Naive thymus-derived CD4-positive, alpha-beta T cell (primary cell): ENCODE measurements at regions of chr16 and their contacts with region 1.

Region 1: DNA sequence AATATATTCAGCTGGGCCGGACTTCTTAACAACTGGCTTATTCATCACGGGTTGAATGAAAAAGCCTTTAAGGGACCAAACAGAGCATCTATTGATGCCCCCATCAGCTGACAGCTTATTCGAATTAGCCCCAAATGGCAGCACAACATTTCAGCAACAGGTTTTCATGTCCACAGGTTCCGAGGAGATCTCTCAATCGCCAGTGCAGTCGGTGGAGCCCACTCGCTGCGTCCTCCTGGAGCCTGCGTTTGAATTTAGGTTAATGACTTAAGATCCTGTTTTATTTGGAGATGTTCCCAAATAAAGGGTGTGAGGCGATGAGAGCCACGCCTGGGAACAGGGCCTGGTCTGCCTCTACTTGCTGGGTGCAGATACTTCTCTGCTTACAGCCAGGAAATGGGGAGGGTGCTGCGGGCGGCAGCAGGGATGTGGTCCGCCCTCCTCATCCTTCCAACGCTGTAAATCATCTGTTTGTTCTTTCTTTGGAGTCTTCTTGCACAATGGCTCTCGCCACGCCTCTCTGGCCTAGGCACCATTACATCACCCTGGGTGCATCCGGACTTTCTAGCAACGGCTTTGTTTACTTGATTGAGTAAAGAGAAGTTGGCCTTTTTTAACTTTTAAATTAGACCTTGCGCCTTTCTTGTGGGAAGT is 22.6 kb downstream of the NDE1 start:
- DNase-seq: peak; percentile 52 to 93 (median 89)
- ATAC-seq: peak; percentile 96
- H3K4me3 ChIP-seq: peak overlapping the region; percentile 32
- H3K4me3 Mint-ChIP-seq: peak overlapping the region; percentile 60 to 86 (median 75)
- H3K27ac ChIP-seq: peak overlapping the region; percentile 86
- H3K27ac Mint-ChIP-seq: peak overlapping the region; percentile 94 to 97 (median 97)
- H3K4me1 ChIP-seq: peaks cover 18 to 27% of the 10 kb centered on the region in 2 donors
- H3K4me1 Mint-ChIP-seq: peaks cover 32 to 57% (median 42%) of the 10 kb centered on the region in 7 donors
- H3K27me3 ChIP-seq: no peaks in the 10 kb centered on the region
- H3K27me3 Mint-ChIP-seq: no peaks in the 10 kb centered on the region

Region 2: GRCh38 chr16:15434425-15435215 is 238.0 kb before region 1 on chr16 and contains the start of gene BMERB1:
- CTCF ChIA-PET with region 1: no interaction called
- POLR2A ChIA-PET with region 1: no interaction called
- intact Hi-C with region 1: no loop called
- DNase-seq: peak in 5 of 9 donors; percentile 7 to 67 (median 13)
- ATAC-seq: peak; percentile 73
- H3K4me3 ChIP-seq: peak within 1 kb of the TSS; percentile 51
- H3K4me3 Mint-ChIP-seq: peak within 1 kb of the TSS; percentile 30 to 92 (median 70)
- H3K27ac ChIP-seq: no peak within 1 kb of the TSS
- H3K27ac Mint-ChIP-seq: peak within 1 kb of the TSS in 3 of 9 donors; percentile 10 to 75 (median 13)
- H3K4me1 ChIP-seq: no peaks in the 10 kb centered on the region
- H3K4me1 Mint-ChIP-seq: peaks cover 0 to 17% (median 11%) of the 10 kb centered on the region in 7 donors
- H3K27me3 ChIP-seq: peaks cover 0 to 5% of the 10 kb centered on the region in 2 donors
- H3K27me3 Mint-ChIP-seq: peaks cover 17 to 25% (median 24%) of the 10 kb centered on the region in 5 donors
- total RNA-seq, gene BMERB1: 1.3 to 8.2 (median 2.8) TPM

Region 3: DNA sequence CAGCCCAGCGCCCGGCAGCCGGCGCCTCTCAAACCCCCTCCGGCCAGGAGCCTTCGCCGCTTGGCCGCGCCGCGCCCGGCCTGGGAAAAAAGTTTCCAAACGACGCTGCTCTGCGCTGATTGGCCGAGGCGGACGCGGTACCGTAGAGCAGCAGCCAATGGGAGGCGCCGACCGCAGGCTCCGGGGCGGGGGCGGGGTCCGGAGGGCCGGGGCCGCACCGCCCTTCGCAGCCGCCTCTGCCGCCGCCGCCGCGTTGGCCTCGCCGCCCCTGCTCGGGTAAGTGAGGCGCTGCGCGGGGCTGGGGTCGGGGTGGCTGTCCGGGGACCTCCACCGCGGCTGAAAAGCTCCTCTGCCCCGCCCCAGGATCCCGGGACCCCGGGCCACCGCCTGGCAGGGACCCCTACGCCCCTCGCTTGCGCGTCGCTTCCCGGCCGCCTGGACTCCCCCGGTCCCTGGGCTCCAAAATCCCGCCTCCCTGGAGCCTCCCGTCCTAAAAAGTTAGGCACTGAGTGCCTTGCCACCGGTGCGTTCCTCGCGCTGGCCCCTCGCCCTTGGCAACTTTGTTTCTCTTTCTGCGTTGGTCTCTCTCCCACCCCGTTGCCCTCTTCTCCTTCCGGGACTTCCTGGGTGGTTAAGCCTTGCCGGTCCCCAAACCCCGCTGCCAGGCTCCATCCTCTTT is 22.5 kb before region 1 on chr16 and contains the start of gene NDE1:
- CTCF ChIA-PET with region 1: interaction called, 3 read pairs
- POLR2A ChIA-PET with region 1: interaction called, 54 read pairs
- intact Hi-C with region 1: loop called (anchors 1 kb)
- DNase-seq: peak; percentile 65 to 85 (median 76)
- ATAC-seq: peak; percentile 99
- H3K4me3 ChIP-seq: peak within 1 kb of the TSS; percentile 84
- H3K4me3 Mint-ChIP-seq: peak within 1 kb of the TSS; percentile 98 to 100 (median 99)
- H3K27ac ChIP-seq: peak within 1 kb of the TSS; percentile 98
- H3K27ac Mint-ChIP-seq: peak within 1 kb of the TSS; percentile 93 to 99 (median 99)
- H3K4me1 ChIP-seq: peaks cover 7 to 14% of the 10 kb centered on the region in 2 donors
- H3K4me1 Mint-ChIP-seq: peaks cover 10 to 37% (median 35%) of the 10 kb centered on the region in 7 donors
- H3K27me3 ChIP-seq: no peaks in the 10 kb centered on the region
- H3K27me3 Mint-ChIP-seq: peaks cover 0 to 2% (median 0%) of the 10 kb centered on the region in 5 donors
- total RNA-seq, gene NDE1: 100.0 to 128 (median 114) TPM

Region 4: DNA sequence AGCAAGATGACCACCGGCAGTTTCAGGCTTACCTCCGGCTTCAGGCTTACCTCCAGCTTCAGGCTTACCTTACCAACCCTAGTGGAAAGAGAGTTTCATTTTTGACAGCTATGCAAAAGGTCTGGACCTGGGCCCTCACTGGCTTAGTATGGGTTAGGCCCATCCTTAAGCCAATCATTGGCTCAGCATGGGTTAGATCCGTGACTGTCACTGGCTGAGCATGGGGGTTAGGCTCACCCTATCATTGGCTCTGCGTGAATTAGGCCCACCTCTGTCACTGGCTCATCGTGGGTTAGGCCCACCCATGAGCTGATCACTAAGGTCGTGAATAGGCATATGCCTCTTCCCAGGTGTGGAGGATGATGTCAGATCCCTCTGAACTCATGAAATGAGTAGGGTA is 14.5 kb before region 1 on chr16:
- CTCF ChIA-PET with region 1: interaction called, 4 read pairs
- POLR2A ChIA-PET with region 1: interaction called, 39 read pairs
- intact Hi-C with region 1: loop called in 1 of 2 experiments (anchors 1 kb)
- DNase-seq: no peak
- ATAC-seq: no peak
- H3K4me3 ChIP-seq: no peak overlapping the region
- H3K4me3 Mint-ChIP-seq: peak overlapping the region in 3 of 10 donors; percentile 13 to 55 (median 21)
- H3K27ac ChIP-seq: peak overlapping the region; percentile 64
- H3K27ac Mint-ChIP-seq: peak overlapping the region; percentile 77 to 93 (median 87)
- H3K4me1 ChIP-seq: peaks cover 5 to 26% of the 10 kb centered on the region in 2 donors
- H3K4me1 Mint-ChIP-seq: peaks cover 31 to 74% (median 66%) of the 10 kb centered on the region in 7 donors
- H3K27me3 ChIP-seq: no peaks in the 10 kb centered on the region
- H3K27me3 Mint-ChIP-seq: no peaks in the 10 kb centered on the region